ENCODE measurements at regions of chr9 and their contacts with region 1.

Region 1: DNA sequence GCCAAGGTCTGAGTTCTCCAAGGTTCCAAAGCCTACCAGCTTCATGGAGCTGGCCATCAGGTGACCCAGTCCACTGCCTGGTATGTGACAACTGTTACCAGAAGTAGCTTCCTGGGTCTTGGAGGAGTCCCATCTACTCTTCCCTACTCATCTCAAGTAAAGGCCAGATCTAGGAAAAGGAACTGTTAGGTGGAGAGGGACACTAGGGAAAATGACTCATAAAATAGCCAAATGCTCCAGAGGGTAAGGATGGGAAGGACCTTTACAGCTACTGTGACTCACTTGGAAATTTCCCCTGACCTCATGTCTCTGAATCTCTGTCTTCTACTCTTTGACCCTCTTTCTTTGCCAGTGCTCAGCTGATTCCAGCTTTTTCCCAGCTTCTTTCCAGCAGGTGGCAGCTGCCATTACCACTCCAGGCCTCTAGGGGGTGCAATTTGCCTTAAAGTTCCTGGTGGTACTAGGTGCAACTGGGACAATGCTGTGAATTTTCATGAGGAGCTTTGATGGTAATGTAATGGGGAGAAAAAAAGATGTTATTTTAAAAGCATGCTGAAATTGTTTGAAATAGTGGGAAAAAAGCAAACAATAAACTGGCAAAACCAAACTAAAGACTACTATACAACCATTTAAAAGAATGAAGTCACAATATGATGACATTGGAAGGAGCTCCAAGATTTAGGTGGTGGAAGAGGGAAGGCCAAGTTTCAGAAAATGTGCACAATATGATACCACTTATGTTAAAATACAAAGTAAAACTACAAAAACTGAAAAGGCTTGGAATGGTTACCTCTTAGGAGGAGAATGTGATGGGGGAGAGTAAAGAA is 27.1 kb upstream of the MYORG start:
- DNase-seq: peak; percentile 78
- H3K4me3 ChIP-seq: peak overlapping the region in 1 of 2 experiments; percentile 44; a peak in 1 of 4 replicates
- H3K27ac ChIP-seq: no peak overlapping the region
- H3K4me1 ChIP-seq: peaks cover 0 to 12% of the 10 kb centered on the region in 2 experiments; a peak in 1 of 4 replicates
- H3K27me3 ChIP-seq: no peaks in the 10 kb centered on the region
- CTCF ChIP-seq: peak; percentile 99
- EP300 ChIP-seq: no peak
- RAD21 ChIP-seq: peak; percentile 99

Region 2: GRCh38 chr9:34332076-34332964 is 71.4 kb before region 1 on chr9:
- CTCF ChIA-PET with region 1: interaction called, 37 read pairs
- POLR2A ChIA-PET with region 1: no interaction called
- DNase-seq: peak; percentile 46
- H3K4me3 ChIP-seq: no peak overlapping the region; a peak in 1 of 4 replicates
- H3K27ac ChIP-seq: no peak overlapping the region
- H3K4me1 ChIP-seq: peaks cover 0 to 6% of the 10 kb centered on the region in 2 experiments; a peak in 2 of 4 replicates
- H3K27me3 ChIP-seq: no peaks in the 10 kb centered on the region
- CTCF ChIP-seq: peak; percentile 62
- EP300 ChIP-seq: no peak
- RAD21 ChIP-seq: peak; percentile 88

Region 3: GRCh38 chr9:34419716-34420504 is 16.1 kb after region 1 on chr9:
- CTCF ChIA-PET with region 1: interaction called, 59 read pairs
- POLR2A ChIA-PET with region 1: interaction called, 3 read pairs
- DNase-seq: peak; percentile 50
- H3K4me3 ChIP-seq: no peak overlapping the region
- H3K27ac ChIP-seq: peak overlapping the region in 1 of 2 experiments; percentile 81; a peak in 2 of 4 replicates
- H3K4me1 ChIP-seq: peaks cover 0 to 32% of the 10 kb centered on the region in 2 experiments; a peak in 1 of 4 replicates
- H3K27me3 ChIP-seq: no peaks in the 10 kb centered on the region
- CTCF ChIP-seq: no peak
- EP300 ChIP-seq: no peak
- RAD21 ChIP-seq: no peak; the same call in 1 of the 2 replicates

Region 4: DNA sequence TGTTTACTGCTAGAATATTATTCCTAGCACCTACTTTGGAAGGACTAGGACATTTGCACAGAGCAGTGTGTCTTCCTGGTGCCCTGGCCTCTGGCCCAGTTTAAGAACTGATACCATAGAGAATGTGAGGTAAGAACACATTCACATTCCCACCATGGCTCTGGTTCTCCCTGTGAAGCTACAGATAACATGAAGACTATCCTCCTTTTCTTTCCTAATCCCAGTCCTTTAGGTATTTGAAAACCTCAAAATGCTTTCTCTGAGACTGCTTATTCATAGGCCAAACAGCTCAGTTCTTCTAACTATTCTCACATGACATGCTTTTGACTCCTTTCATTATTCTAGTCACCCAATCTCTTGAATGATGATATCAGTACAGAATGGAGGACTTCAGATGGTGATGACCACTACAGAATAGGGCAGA is 42.7 kb after region 1 on chr9:
- CTCF ChIA-PET with region 1: interaction called, 26 read pairs
- POLR2A ChIA-PET with region 1: no interaction called
- DNase-seq: no peak
- H3K4me3 ChIP-seq: no peak overlapping the region
- H3K27ac ChIP-seq: no peak overlapping the region
- H3K4me1 ChIP-seq: peaks cover 9 to 15% of the 10 kb centered on the region in 2 experiments; a peak in 2 of 4 replicates
- H3K27me3 ChIP-seq: no peaks in the 10 kb centered on the region
- CTCF ChIP-seq: no peak
- EP300 ChIP-seq: no peak
- RAD21 ChIP-seq: no peak

Region 5: DNA sequence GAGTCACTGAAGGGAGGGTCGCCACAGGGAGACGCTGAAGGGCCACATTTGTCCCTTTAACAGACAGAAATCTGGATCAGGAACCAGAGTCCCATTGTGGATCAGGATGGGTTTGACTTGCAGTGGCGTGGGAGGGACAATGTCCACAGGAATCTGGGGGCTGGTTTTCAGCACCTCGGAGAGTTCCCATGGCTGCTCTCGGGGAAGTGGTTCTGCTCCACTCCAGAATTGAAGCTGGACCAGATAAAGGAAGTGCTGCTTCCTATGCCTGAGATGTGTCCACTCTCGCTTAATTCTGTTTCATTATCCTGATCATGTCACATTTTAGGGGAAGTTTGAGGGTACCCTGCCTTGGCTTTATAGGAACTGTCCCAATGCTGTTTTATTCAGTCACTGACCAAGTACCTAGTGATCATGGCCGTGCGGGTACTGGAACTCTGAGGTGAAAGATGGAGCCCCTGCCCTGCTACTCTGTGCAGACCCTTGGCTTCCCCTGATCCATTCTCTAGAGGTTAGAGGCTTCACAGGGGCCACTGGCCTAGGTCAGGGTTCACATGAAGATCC is 90.3 kb after region 1 on chr9:
- CTCF ChIA-PET with region 1: interaction called, 103 read pairs
- POLR2A ChIA-PET with region 1: no interaction called
- DNase-seq: no peak
- H3K4me3 ChIP-seq: no peak overlapping the region
- H3K27ac ChIP-seq: no peak overlapping the region
- H3K4me1 ChIP-seq: peaks cover 0 to 6% of the 10 kb centered on the region in 2 experiments; a peak in 1 of 4 replicates
- H3K27me3 ChIP-seq: no peaks in the 10 kb centered on the region; the same call in 1 of the 2 replicates
- CTCF ChIP-seq: no peak
- EP300 ChIP-seq: no peak
- RAD21 ChIP-seq: no peak

Region 6: GRCh38 chr9:34513567-34514214 is 109.9 kb after region 1 on chr9:
- CTCF ChIA-PET with region 1: interaction called, 12 read pairs
- POLR2A ChIA-PET with region 1: no interaction called
- DNase-seq: no peak
- H3K4me3 ChIP-seq: no peak overlapping the region
- H3K27ac ChIP-seq: no peak overlapping the region
- H3K4me1 ChIP-seq: peaks cover 0 to 16% of the 10 kb centered on the region in 2 experiments; a peak in 1 of 4 replicates
- H3K27me3 ChIP-seq: no peaks in the 10 kb centered on the region; the same call in 1 of the 2 replicates
- CTCF ChIP-seq: no peak
- EP300 ChIP-seq: no peak
- RAD21 ChIP-seq: no peak

Region 7: DNA sequence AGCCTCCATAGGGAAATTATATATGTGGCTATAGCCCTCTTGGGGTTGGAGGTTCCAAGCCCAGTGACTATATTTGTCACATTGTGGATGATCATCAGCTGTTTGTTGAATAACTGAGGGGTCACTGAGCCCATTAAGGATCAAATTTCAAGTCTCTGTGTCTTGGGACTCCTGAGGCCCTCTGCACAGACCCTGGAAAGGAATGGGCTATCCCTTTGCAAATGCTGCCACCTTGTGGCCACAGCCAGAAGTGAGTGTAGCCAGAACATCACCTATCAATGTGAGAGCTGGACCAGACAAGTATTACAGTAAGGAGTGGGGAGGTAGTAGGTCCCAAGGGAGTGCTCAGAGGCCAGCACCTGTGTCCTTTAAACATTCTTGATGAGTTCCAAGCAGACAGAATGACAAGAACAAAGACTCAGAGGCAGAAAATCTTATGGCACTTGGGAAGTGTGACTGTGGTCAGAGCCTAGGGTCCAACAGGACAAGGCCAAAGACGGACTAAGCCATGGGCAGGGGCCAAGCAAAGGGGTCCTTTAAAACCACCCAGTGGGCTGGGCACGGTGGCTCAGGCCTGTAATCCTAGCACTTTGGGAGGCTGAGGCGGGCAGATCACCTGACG is 200.0 kb after region 1 on chr9:
- CTCF ChIA-PET with region 1: interaction called, 67 read pairs
- POLR2A ChIA-PET with region 1: no interaction called
- DNase-seq: peak; percentile 88
- H3K4me3 ChIP-seq: no peak overlapping the region; a peak in 1 of 4 replicates
- H3K27ac ChIP-seq: no peak overlapping the region
- H3K4me1 ChIP-seq: peaks cover 0 to 7% of the 10 kb centered on the region in 2 experiments; a peak in 1 of 4 replicates
- H3K27me3 ChIP-seq: no peaks in the 10 kb centered on the region
- CTCF ChIP-seq: peak; percentile 94
- EP300 ChIP-seq: no peak
- RAD21 ChIP-seq: peak; percentile 97

Measured in SK-N-SH (cell line).